Stomach (tissue), 19 donors: ENCODE measurements at regions of chr17 and their contacts with region 1.

Region 1: GRCh38 chr17:72118335-72119076 is 2.3 kb upstream of the SOX9 start:
- DNase-seq: peak; percentile 75 to 94
- H3K4me3 ChIP-seq: peak overlapping the region; percentile 45 to 74 (median 46)
- H3K27ac ChIP-seq: peak overlapping the region in 1 of 5 donors; percentile 91
- H3K4me1 ChIP-seq: peaks cover 38 to 72% (median 64%) of the 10 kb centered on the region in 4 donors
- H3K27me3 ChIP-seq: peaks cover 12 to 100% (median 56%) of the 10 kb centered on the region in 3 donors
- CTCF ChIP-seq: peak in 6 of 7 experiments; percentile 4 to 86 (median 84)
- EP300 ChIP-seq: no peak
- POLR2A ChIP-seq: no peak

Region 2: DNA sequence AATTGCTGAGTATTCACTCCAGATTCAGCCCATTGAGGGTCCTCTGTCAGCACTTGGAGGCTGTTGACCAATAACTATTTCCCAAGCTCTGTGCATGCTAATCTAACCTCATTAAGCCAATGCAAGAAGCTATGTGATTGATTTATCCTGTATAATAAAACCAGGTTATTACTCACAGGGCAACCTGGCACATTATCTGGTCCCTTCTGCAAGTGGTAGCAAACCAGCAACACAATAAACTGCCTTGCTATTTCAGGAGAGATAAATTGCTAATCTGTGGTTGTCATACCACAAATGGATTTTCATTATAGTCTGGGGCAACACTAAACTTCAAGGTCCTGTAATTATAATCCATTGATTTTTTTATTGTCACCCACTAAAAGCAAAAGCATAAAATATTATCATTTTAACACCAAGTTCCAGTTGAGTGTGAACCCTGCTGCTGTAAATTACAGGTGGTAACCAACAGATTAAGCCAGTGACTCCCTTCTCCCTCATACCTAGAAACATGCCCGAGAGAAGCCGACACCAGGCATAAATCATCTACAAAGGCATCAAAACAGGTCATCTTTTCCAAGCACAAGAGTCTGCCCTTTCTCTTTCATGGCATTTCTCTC is 48.8 kb before region 1 on chr17:
- intact Hi-C with region 1: no loop called
- DNase-seq: no peak
- H3K4me3 ChIP-seq: no peak overlapping the region
- H3K27ac ChIP-seq: no peak overlapping the region
- H3K4me1 ChIP-seq: no peaks in the 10 kb centered on the region
- H3K27me3 ChIP-seq: no peaks in the 10 kb centered on the region
- CTCF ChIP-seq: no peak
- EP300 ChIP-seq: no peak
- POLR2A ChIP-seq: no peak

Region 3: DNA sequence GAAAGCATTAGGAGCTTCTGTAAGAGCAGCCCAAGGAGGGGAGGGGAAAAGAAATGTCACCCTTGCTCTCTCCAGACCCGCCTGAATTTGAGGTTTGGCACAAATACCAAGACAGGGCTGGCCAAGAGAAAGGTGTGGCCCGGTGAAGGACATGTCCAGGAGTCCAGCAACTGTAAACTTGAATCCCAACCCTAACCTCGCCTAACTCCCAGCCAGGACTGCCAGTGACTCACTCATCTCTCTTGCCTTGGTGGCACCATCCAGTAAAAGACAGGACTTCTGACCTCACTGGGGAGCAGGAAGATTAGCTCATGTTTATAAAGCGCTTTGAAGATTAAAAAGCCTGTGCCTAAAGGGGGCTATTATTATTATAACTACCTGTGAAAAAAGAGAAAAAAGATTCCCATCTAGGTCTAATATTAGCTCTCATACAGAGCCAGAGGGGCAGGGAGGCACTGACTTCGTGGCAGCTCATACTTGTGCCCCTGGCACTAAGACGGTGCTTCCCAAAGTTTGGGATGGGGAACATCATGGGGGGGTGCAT is 337.6 kb after region 1 on chr17:
- intact Hi-C with region 1: loop called (anchors 10 kb)
- DNase-seq: peak; percentile 63 to 72
- H3K4me3 ChIP-seq: no peak overlapping the region
- H3K27ac ChIP-seq: peak overlapping the region in 4 of 5 donors; percentile 29 to 71 (median 51)
- H3K4me1 ChIP-seq: peaks cover 0 to 36% (median 19%) of the 10 kb centered on the region in 4 donors
- H3K27me3 ChIP-seq: no peaks in the 10 kb centered on the region
- CTCF ChIP-seq: no peak
- EP300 ChIP-seq: no peak
- POLR2A ChIP-seq: no peak